PC-9 (cell line): ENCODE measurements at regions of chr16 and their contacts with region 1.

Region 1: DNA sequence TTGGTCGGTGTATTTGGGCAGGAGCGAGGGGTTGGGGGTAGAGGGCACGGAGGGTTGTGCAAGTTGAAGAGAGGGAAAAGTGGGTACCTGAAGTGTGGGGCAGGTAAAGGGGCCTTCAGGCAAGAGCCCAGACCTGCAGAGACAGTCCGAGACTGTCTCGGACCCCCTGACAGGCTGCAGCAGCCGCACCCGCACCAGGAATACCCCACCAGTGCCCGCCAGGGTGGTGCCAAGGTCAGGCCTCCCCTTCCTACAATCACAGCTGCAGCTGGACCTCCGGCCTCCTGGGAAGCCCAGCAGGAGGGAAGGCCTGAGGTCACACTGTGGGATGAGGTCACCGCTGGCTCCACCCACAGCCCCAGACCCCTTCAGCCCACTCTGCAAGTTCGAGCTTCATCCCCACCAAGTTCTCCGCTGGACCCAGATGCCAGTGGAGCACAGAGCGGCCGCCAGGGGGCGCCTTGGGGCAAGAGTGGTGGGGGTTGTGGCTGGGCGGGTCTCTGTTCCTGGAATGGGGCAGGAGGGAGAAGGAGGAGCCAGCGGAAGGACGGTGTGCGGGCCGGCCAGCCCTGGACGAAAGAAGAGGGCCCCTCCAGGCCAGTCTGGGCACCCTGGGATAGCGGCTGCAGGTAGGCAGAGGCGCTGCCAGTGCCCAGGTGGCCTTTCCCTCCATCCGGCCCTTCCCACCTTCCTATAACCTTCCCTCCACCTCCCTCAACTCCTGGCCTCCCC is at the start of gene HSD3B7:
- DNase-seq: peak; percentile 59 to 95
- H3K4me3 ChIP-seq: peak within 1 kb of the TSS; percentile 45; the same call in 1 of the 2 replicates
- H3K27ac ChIP-seq: no peak within 1 kb of the TSS
- H3K4me1 ChIP-seq: no peaks in the 10 kb centered on the region; the same call in 1 of the 2 replicates
- H3K27me3 ChIP-seq: no peaks in the 10 kb centered on the region
- CTCF ChIP-seq: peak; percentile 97
- total RNA-seq, gene HSD3B7: 34.8 and 44.2 TPM in 2 replicates

Region 2: DNA sequence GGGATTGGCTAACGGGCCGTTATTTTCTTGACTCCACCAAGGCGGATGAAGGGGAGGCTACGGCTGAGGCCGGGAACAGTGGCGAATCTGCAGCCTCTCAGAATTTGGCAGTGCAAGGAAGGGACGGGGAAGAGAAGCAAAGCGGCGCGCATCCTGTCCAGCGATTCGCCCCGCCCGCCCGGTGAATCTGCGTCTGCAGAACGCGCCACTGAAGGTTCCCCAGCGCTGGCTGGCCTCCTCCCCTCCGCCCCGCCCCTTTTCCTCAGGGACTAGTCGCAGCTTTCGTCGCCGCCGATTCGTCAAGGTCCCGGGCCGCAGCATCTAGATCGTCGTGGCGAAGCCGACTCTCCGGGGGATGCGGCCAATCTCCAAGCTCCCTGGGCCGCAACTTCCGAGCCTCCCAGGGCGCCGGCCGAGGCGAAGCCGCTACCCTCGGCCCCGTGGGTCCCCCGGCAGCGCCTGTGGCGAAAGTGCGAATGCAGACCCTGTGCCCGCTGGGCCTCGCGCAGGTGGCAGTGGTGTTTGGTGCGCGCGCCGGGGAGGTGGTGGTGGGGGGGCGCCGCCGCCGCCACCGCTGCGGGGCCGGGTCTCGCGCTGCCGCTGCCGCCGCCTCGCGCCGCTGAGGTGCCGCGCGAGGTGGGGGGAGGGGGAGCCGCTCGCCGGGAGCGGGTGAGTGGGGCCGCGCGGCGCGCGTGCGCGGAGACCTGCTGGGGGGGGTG is 27.2 kb before region 1 on chr16 and contains the start of gene SETD1A:
- CTCF ChIA-PET with region 1: no interaction called
- POLR2A ChIA-PET with region 1: interaction called, 10 read pairs
- intact Hi-C with region 1: no loop called
- DNase-seq: peak; percentile 86 to 96
- H3K4me3 ChIP-seq: peak within 1 kb of the TSS; percentile 97
- H3K27ac ChIP-seq: peak within 1 kb of the TSS; percentile 82
- H3K4me1 ChIP-seq: peaks cover 9% of the 10 kb centered on the region
- H3K27me3 ChIP-seq: no peaks in the 10 kb centered on the region
- CTCF ChIP-seq: no peak
- total RNA-seq, gene SETD1A: 29.6 and 33.2 TPM in 2 replicates

Region 3: GRCh38 chr16:31073968-31074813 is 89.4 kb after region 1 on chr16 and contains the starts of genes ZNF646 and ZNF668:
- CTCF ChIA-PET with region 1: interaction called, 21 read pairs
- POLR2A ChIA-PET with region 1: no interaction called
- intact Hi-C with region 1: loop called (anchors 1 kb)
- DNase-seq: peak; percentile 98 to 99
- H3K4me3 ChIP-seq: peak within 1 kb of the TSS; percentile 89
- H3K27ac ChIP-seq: peak within 1 kb of the TSS; percentile 62
- H3K4me1 ChIP-seq: peaks cover 20% of the 10 kb centered on the region
- H3K27me3 ChIP-seq: no peaks in the 10 kb centered on the region
- CTCF ChIP-seq: no peak
- total RNA-seq, gene ZNF646: 25.4 and 30.7 TPM in 2 replicates
- total RNA-seq, gene ZNF668: 13.2 and 17.4 TPM in 2 replicates

Region 4: DNA sequence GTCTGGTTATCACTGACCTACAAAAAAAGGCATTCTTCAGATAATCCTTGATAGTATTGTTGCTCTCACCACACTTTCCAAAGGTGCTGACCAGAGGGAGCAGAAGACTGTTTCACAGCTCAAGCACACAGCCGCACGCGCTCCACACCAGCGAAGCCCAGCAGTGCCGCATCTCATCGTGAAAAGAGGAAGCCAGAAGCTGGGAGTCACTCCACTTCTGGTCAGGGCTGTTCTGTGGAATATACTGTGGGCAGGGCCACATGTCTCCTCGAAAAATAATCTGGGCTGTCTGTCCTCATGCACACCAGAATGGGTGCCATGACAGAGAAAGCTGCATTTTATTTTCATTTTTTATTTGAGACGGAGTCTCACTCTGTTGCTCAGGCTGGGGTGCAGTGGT is 172.3 kb after region 1 on chr16:
- CTCF ChIA-PET with region 1: no interaction called
- POLR2A ChIA-PET with region 1: no interaction called
- intact Hi-C with region 1: loop called (anchors 1 kb)
- DNase-seq: no peak
- H3K4me3 ChIP-seq: no peak overlapping the region
- H3K27ac ChIP-seq: no peak overlapping the region
- H3K4me1 ChIP-seq: peaks cover 10% of the 10 kb centered on the region; the same call in 1 of the 2 replicates
- H3K27me3 ChIP-seq: no peaks in the 10 kb centered on the region
- CTCF ChIP-seq: no peak

Region 5: DNA sequence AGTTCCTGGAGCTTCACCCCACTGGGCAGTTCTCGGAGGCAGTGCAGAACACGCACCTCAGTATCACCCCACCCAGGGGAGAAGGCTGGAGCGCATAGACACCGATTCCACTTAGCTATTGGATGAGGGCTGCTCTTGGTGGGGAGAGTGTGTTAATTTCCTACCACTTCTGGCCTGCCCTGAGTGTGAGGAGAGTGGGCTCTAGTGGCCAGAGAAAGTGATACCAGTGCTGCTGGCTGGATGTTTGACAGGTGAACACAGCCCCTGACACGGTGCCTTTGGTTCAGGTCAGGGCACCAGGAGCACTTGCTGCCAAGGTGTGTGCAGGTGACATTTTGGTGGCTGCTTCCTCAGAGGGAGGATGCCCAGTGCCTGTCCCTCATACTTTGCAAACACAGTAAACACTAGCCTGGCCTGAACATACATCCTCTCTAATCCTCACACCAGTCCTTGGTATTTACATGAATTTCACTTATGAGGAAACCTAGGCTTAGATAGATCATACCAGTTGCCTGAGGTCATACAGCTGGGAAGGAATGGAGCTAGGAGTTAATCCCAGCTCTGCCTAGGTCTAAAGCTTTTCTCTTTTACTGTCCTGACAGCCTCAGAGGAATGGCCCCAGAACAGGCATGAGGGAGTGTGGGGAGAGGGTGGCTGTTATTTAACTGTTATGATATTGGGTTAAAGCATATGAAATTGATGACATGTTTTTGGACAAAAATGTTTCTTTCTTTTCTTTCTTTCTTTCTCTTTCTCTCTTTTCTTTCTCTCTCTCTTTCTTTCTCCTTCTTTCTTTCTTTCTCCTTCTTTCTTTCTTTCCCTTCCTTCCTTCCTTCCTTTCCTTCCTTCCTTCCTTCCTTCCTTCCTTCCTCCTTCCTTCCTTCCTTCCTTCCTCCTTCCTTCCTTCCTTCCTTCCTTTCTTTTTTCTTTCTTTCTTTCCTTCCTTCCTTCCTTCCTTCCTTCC is 349.1 kb after region 1 on chr16:
- CTCF ChIA-PET with region 1: no interaction called
- POLR2A ChIA-PET with region 1: no interaction called
- intact Hi-C with region 1: loop called (anchors 1 kb)
- DNase-seq: peak; percentile 57 to 60
- H3K4me3 ChIP-seq: no peak overlapping the region
- H3K27ac ChIP-seq: no peak overlapping the region
- H3K4me1 ChIP-seq: no peaks in the 10 kb centered on the region
- H3K27me3 ChIP-seq: peaks cover 47% of the 10 kb centered on the region
- CTCF ChIP-seq: peak; percentile 70

Region 6: GRCh38 chr16:31440516-31441184 is 455.8 kb after region 1 on chr16:
- CTCF ChIA-PET with region 1: interaction called, 5 read pairs
- POLR2A ChIA-PET with region 1: no interaction called
- intact Hi-C with region 1: loop called (anchors 1 kb)
- DNase-seq: no peak
- H3K4me3 ChIP-seq: no peak overlapping the region
- H3K27ac ChIP-seq: no peak overlapping the region
- H3K4me1 ChIP-seq: no peaks in the 10 kb centered on the region
- H3K27me3 ChIP-seq: no peaks in the 10 kb centered on the region
- CTCF ChIP-seq: no peak

Region 7: DNA sequence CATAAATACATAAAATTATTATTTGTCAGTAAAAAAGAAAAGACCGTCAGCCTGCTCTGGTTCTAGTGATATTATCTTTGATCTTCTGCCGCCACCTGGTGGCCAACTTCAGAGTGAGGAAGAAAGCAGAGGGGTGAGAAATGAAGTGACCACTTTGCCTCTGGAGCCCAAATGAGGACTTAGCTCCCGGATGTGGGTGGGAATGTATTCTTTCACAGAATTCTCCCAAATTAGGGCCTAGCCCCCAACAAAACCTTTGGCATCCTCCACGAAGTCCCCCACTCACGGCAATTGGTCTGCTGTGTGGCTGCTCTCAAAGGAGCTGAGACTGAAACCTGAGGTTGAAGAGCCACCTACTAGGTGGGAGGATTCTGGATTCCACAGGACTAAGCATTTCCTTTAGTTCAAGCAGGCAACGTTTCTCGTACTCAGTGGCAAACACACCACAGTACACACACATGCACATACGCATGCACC is 883.9 kb after region 1 on chr16:
- CTCF ChIA-PET with region 1: no interaction called
- POLR2A ChIA-PET with region 1: no interaction called
- intact Hi-C with region 1: loop called (anchors 1 kb)
- DNase-seq: peak; percentile 54 to 78
- H3K4me3 ChIP-seq: no peak overlapping the region
- H3K27ac ChIP-seq: no peak overlapping the region
- H3K4me1 ChIP-seq: no peaks in the 10 kb centered on the region
- H3K27me3 ChIP-seq: peaks cover 13% of the 10 kb centered on the region
- CTCF ChIP-seq: peak; percentile 94